Testis (tissue), 5 donors: ENCODE measurements at regions of chr1 and their contacts with region 1.

Region 1: DNA sequence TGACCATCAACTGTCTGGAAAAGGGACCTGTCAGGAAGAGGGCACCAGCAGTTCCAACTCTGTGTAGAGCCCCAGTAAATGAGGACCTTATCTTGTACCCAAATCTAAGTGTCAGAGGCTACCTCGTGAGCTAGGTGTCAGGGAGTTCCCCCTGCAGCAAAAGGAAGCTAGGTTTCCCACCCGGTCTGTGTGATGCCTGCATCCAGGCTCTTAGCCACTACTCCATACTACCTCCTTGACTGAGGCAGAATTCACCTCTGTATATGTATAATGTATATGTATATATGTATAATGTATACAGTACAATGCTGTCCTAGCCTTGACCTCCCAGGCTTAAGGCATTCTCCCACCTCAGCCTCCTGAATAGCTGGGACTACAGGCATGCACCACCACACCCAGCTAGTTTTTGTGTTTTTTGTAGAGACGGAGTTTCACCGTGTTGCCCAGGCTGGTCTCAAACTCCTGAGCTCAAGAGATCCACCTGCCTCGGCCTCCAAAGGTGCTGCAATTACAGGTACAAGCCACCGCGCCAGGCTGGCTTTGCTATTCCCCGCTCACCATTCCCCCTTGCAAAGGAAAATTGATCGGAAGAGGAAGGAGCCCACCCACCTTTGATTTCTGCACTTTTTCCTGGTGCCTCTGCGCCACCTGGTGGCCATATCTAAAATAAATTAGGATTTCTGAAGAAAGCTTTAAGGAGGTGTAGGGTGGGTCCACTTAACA is 15.7 kb upstream of the LUZP1 start:
- DNase-seq: peak; percentile 30
- H3K4me3 ChIP-seq: no peak overlapping the region
- H3K27ac ChIP-seq: no peak overlapping the region
- H3K4me1 ChIP-seq: peaks cover 5% of the 10 kb centered on the region
- H3K27me3 ChIP-seq: no peaks in the 10 kb centered on the region
- CTCF ChIP-seq: peak; percentile 94 to 97 (median 95)
- POLR2A ChIP-seq: no peak

Region 2: GRCh38 chr1:23098463-23099170 is 85.8 kb before region 1 on chr1:
- intact Hi-C with region 1: loop called (anchors 5 kb)
- DNase-seq: peak; percentile 75
- H3K4me3 ChIP-seq: no peak overlapping the region
- H3K27ac ChIP-seq: no peak overlapping the region
- H3K4me1 ChIP-seq: peaks cover 20% of the 10 kb centered on the region
- H3K27me3 ChIP-seq: no peaks in the 10 kb centered on the region
- CTCF ChIP-seq: peak; percentile 86 to 90 (median 87)
- POLR2A ChIP-seq: no peak